AG04450 (cell line): ENCODE measurements at regions of chr16 and their contacts with region 1.

Region 1: DNA sequence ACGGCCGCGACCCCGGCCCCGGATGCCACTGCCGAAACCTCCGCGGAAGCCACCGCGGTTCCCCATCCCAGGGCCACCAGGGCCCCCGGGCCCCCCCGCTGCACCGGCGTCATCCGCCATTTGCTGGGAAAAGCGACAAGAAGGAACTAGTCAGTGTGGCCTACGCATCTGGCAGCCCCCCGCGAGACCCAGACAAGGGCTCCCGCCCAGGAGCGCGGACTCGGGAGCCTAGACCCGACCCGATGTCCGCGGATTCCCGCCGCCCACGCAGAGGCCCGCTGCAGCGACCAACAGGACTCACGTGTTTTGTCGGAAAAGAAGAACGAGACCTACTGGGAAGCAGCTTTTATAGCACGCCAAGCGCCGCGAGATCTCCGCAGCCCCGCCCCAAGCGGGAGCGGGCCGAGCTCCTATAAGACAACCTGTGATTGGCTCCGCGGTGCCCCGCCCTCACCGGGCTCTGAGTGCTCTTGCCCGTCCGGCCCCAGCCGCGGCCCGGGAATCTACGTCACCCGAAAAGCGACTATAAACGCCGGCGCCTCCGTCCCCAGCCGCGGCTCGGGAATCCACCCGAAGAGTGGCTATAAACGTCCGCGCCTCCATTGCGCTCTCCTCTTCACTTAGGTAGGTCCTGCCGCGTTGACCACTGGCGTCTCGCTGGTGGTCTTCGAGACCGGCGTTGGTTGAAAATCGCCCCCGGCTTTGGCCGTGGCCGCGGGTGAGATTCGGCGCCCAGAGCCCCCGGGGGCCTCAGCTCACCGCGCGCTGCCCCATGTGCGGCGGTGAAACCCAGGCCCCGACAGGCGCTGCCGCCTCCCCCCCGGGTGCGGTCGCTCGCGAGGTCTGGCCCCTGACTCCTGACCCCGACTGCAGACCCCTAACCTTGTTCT is at the start of gene RPS2:
- DNase-seq: peak; percentile 98
- H3K4me3 ChIP-seq: peak within 1 kb of the TSS; percentile 90
- H3K27ac ChIP-seq: peak within 1 kb of the TSS; percentile 91
- H3K27me3 ChIP-seq: no peaks in the 10 kb centered on the region
- CTCF ChIP-seq: no peak
- polyA plus RNA-seq, gene RPS2: 2,494 and 4,570 TPM in 2 replicates

Region 2: DNA sequence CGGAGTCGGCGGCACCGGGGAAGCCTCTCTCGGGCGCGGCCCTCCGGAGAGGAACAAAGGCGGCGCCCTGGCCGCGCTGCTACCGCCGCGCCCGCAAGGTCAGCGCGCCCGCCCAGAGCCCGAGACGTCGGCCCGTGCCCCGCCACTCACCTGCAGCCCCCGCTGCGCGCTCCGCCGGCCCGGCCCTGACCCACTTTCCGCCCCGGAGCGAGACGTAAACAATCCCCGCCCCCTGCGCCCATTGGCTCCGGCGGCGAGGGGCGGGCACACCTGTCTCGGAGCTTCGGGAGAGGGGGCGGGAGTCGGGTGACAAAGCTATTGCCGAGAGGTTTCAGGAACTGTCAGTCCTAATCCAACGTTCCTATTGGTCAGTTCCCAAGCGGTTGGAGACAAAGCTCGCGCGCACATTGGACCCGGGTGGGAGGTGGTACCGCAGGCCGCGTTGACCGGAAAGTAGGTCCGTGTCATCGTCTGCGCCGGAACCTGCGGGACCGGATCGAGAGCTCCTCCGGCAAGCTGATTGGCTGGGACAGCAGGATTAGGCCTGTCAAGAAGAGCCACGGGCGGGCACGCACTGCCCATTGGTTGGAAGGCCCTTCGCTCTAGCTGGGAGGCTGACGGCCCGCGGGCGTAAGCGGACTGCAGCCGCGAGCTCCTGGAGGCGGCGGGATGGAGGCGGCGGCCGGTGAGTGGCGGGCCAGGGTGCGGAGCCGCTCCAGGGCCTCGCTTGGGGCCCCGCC is 182.2 kb before region 1 on chr16 and contains the starts of genes NUBP2 and SPSB3:
- CTCF ChIA-PET with region 1: no interaction called
- POLR2A ChIA-PET with region 1: interaction called, 15 read pairs
- DNase-seq: peak; percentile 100
- H3K4me3 ChIP-seq: peak within 1 kb of the TSS; percentile 80
- H3K27ac ChIP-seq: peak within 1 kb of the TSS; percentile 21
- H3K27me3 ChIP-seq: no peaks in the 10 kb centered on the region
- CTCF ChIP-seq: no peak
- polyA plus RNA-seq, gene NUBP2: 20.0 and 29.2 TPM in 2 replicates
- polyA plus RNA-seq, gene SPSB3: 11.0 and 13.3 TPM in 2 replicates

Region 3: DNA sequence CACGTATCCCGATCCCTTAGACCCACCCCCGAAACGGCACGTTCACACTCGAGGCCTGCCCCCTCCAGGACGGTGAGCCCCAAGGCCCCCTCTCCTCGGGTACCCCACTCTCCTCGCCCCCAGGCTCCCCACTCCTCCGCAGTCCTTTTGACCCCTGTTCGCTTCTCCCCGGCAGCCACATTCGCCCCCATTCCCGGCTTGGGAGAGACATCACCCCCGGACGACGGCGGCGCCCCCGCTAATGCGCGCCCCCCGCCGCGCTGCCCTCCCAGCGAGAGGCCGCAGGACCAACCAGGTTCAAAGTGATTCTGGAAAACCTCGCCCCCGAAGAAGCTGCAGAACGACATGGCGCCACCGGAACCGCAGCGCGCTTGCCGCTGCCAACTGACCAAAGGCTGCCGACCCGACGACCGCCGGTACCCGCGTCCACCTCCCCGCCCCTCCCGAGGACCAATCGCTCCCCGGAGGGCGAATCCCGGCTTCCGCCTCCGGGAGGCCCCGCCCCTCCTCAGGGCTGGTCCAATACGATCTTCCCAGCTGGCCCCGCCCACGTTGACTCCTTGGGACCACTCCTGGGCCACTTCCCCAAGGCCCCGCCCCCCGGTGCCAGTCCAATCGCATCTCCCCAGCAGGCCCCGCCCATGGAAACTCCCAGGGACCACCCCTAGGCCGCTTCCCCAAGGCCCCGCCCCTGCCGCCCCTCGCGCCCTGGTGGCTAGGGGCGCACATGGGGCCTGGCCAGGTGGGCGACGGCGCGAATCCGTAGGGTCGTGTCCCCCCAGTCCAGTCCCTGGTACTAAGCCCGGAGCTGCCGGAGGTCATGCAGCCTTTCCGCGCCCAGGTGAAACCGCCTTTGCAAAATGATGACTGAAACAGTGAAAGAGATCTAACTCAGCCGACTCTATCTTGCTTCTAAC is 21.7 kb before region 1 on chr16 and contains the start of gene MSRB1:
- CTCF ChIA-PET with region 1: no interaction called
- POLR2A ChIA-PET with region 1: interaction called, 15 read pairs
- DNase-seq: peak; percentile 94
- H3K4me3 ChIP-seq: peak within 1 kb of the TSS; percentile 88
- H3K27ac ChIP-seq: no peak within 1 kb of the TSS
- H3K27me3 ChIP-seq: no peaks in the 10 kb centered on the region
- CTCF ChIP-seq: no peak
- polyA plus RNA-seq, gene MSRB1: 23.1 and 32.6 TPM in 2 replicates

Region 4: DNA sequence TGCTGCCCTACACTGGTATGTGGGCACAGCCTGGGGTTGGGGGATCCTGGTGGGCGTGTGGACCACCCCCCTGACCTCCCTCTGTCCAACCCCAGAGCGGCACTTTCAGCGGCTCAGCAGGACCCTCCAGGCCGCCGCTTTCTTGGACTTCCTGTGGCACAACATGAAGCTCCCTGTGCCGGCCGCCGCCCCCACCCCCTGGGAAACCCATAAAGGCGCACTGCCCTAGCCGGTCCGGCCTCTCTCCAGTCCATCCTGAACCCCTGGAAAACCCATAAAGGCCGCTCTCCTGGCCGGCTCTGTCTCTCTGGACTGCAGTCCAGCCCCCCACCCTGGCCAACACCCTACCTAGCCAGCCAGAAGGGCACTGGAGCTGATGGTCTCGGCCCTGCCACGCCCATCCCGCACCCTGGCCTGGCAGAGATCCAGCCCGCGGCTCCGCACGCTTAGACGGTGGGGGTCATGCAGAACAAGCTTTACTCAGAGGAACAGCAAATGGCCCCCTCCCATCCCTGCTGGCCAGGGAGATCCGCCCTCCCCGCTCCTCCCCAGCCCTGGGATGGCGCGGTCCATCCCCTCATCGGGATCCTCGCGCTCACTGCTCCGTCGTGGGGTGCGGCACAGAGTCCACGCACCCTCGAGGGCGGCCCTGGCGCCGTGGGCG is 13.8 kb after region 1 on chr16:
- CTCF ChIA-PET with region 1: no interaction called
- POLR2A ChIA-PET with region 1: interaction called, 20 read pairs
- DNase-seq: no peak
- H3K4me3 ChIP-seq: no peak overlapping the region
- H3K27ac ChIP-seq: no peak overlapping the region
- H3K27me3 ChIP-seq: peaks cover 36% of the 10 kb centered on the region
- CTCF ChIP-seq: no peak

Region 5: DNA sequence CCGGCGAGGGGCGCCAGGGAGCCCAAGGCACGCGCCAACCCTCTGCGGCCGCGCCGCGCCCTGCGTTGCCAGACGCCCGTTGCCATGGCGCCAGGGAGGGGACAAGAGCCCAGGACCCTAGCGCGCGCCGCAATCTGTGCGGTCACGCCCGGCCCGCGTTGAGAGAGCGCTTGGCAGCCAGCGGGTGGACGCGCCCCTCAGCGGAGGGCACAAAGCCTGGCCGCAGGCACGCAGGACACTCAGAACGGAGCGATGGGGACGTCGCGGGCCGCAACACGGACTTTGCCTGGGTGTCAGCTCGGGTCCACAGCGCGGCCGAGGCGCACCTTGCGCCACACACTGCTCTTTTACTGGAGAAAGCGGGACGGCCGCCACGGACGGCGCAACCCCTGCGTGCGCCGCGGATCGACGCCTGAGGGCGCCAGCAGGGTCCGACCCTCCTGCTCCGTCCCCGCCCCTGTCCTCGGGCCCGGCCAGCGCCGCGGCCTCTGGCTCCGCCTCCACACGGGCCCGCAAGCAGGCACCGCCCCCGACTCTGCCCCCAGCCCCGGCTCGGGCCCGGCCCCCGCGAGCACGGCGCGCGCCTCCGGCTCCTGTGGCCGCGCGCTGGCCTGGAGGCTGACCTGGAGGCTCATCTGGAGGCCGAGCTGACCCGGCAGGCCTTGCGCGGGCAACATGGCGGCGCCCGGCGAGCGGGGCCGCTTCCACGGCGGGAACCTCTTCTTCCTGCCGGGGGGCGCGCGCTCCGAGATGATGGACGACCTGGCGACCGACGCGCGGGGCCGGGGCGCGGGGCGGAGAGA is 19.0 kb after region 1 on chr16 and contains the start of gene GFER:
- CTCF ChIA-PET with region 1: no interaction called
- POLR2A ChIA-PET with region 1: interaction called, 20 read pairs
- DNase-seq: peak; percentile 72
- H3K4me3 ChIP-seq: peak within 1 kb of the TSS; percentile 74
- H3K27ac ChIP-seq: no peak within 1 kb of the TSS
- H3K27me3 ChIP-seq: peaks cover 36% of the 10 kb centered on the region
- CTCF ChIP-seq: peak; percentile 44
- polyA plus RNA-seq, gene GFER: 15.8 and 19.5 TPM in 2 replicates

Region 6: DNA sequence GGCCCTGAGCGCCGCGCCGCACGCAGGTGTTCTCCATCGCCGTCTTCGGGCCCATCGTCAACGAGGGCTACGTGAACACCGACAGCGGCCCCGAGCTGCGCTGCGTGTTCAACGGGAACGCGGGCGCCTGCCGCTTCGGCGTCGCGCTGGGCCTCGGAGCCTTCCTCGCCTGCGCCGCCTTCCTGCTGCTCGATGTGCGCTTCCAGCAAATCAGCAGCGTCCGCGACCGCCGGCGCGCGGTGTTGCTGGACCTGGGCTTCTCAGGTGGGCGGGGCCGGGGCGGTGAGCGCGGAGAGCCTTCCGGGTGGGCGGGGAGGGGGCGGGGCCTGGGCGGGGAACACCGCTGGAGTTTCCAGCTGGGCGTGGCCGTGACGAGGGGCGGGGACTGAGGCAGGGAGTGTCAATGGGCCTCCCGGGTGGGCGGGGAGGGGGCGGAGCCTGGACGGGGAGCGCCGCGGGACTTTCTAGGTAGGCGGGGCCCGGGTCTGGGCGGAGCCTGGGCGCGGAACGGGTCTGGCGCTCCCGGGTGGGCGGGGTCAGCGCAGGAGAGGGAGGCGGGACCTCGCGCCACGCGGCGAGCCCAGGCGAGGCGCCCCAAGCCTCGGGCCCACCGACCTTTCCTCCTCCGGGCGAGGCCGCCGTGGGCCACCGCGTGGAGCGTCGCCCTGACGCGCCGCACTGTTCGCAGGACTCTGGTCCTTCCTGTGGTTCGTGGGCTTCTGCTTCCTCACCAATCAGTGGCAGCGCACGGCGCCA is 27.4 kb after region 1 on chr16:
- CTCF ChIA-PET with region 1: no interaction called
- POLR2A ChIA-PET with region 1: interaction called, 10 read pairs
- DNase-seq: peak; percentile 67
- H3K4me3 ChIP-seq: peak overlapping the region; percentile 48
- H3K27ac ChIP-seq: no peak overlapping the region
- H3K27me3 ChIP-seq: peaks cover 21% of the 10 kb centered on the region
- CTCF ChIP-seq: no peak

Region 7: DNA sequence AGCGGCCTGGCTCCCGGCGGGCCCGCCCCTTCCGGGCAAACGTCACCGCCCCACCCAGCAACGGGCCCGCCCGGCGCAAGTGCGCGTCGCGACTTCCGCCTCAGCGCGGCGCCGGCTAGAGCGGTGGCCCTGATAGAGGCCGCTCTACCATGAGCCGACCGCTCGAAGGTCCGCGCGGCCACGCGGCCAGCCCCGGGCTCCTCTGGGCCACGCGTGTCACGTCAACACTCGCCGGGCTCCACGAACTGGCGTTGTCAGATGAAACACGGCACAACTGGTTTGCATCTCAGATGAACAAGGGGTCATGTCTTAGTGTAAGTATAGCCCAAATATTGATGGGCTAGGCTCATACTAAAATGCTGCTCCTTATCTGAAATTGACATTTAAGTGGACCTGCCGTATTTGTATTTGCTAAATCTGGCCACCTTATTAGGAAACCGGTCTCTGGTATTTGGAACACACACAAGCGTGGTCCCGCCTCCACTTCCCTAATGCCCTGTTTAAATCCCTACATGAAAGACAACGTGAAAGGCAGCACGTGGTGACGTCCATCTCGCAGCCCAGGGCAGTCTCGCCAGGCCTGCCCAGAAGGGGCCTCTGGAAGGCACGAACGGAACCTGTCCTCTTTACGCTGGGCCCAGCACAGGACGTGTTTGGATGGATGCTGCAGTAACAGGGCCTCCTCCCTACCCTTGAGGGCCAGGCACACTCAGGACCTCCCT is 45.2 kb after region 1 on chr16 and contains the start of gene ZNF598:
- CTCF ChIA-PET with region 1: no interaction called
- POLR2A ChIA-PET with region 1: interaction called, 13 read pairs
- DNase-seq: no peak
- H3K4me3 ChIP-seq: peak within 1 kb of the TSS; percentile 64
- H3K27ac ChIP-seq: peak within 1 kb of the TSS; percentile 70
- H3K27me3 ChIP-seq: no peaks in the 10 kb centered on the region
- CTCF ChIP-seq: no peak
- polyA plus RNA-seq, gene ZNF598: 8.2 and 10.7 TPM in 2 replicates